Activated CD8-positive, alpha-beta T cell treated with anti-CD3 and anti-CD28 coated beads, Interleukin-2, amount 10 ng/mL, durations not matched to agents 7 days and 5 days (primary cell): ENCODE measurements at regions of chr6 and their contacts with region 1.

Region 1: GRCh38 chr6:37566111-37566949 is 66.6 kb upstream of the CCDC167 start:
- DNase-seq: peak; percentile 75
- ATAC-seq: peak; percentile 96
- H3K4me3 Mint-ChIP-seq: peak overlapping the region; percentile 29
- H3K27ac Mint-ChIP-seq: no peak overlapping the region
- H3K4me1 Mint-ChIP-seq: peaks cover 3% of the 10 kb centered on the region
- H3K27me3 Mint-ChIP-seq: peaks cover 17% of the 10 kb centered on the region

Region 2: GRCh38 chr6:37155394-37156312 is 410.7 kb before region 1 on chr6:
- CTCF ChIA-PET with region 1: no interaction called
- POLR2A ChIA-PET with region 1: no interaction called
- DNase-seq: no peak
- ATAC-seq: peak; percentile 64
- H3K4me3 Mint-ChIP-seq: no peak overlapping the region
- H3K27ac Mint-ChIP-seq: no peak overlapping the region
- H3K4me1 Mint-ChIP-seq: peaks cover 16% of the 10 kb centered on the region
- H3K27me3 Mint-ChIP-seq: peaks cover 2% of the 10 kb centered on the region

Region 3: GRCh38 chr6:37222125-37222967 is 344.0 kb before region 1 on chr6:
- CTCF ChIA-PET with region 1: no interaction called
- POLR2A ChIA-PET with region 1: no interaction called
- DNase-seq: peak; percentile 86
- ATAC-seq: peak; percentile 97
- H3K4me3 Mint-ChIP-seq: peak overlapping the region; percentile 81
- H3K27ac Mint-ChIP-seq: peak overlapping the region; percentile 65
- H3K4me1 Mint-ChIP-seq: peaks cover 38% of the 10 kb centered on the region
- H3K27me3 Mint-ChIP-seq: no peaks in the 10 kb centered on the region

Region 4: GRCh38 chr6:37491171-37491829 is 75.0 kb before region 1 on chr6:
- CTCF ChIA-PET with region 1: interaction called, 13 read pairs
- POLR2A ChIA-PET with region 1: no interaction called
- DNase-seq: no peak
- ATAC-seq: no peak
- H3K4me3 Mint-ChIP-seq: no peak overlapping the region
- H3K27ac Mint-ChIP-seq: no peak overlapping the region
- H3K4me1 Mint-ChIP-seq: peaks cover 45% of the 10 kb centered on the region
- H3K27me3 Mint-ChIP-seq: no peaks in the 10 kb centered on the region

Region 5: GRCh38 chr6:37516076-37516919 is 50.0 kb before region 1 on chr6:
- CTCF ChIA-PET with region 1: interaction called, 29 read pairs
- POLR2A ChIA-PET with region 1: interaction called, 3 read pairs
- DNase-seq: peak; percentile 94
- ATAC-seq: peak; percentile 89
- H3K4me3 Mint-ChIP-seq: peak overlapping the region; percentile 83
- H3K27ac Mint-ChIP-seq: peak overlapping the region; percentile 98
- H3K4me1 Mint-ChIP-seq: peaks cover 74% of the 10 kb centered on the region
- H3K27me3 Mint-ChIP-seq: no peaks in the 10 kb centered on the region

Region 6: GRCh38 chr6:37547564-37548061 is 18.7 kb before region 1 on chr6:
- CTCF ChIA-PET with region 1: interaction called, 26 read pairs
- POLR2A ChIA-PET with region 1: no interaction called
- DNase-seq: peak; percentile 46
- ATAC-seq: peak; percentile 64
- H3K4me3 Mint-ChIP-seq: peak overlapping the region; percentile 23
- H3K27ac Mint-ChIP-seq: peak overlapping the region; percentile 77
- H3K4me1 Mint-ChIP-seq: peaks cover 20% of the 10 kb centered on the region
- H3K27me3 Mint-ChIP-seq: peaks cover 2% of the 10 kb centered on the region

Region 7: DNA sequence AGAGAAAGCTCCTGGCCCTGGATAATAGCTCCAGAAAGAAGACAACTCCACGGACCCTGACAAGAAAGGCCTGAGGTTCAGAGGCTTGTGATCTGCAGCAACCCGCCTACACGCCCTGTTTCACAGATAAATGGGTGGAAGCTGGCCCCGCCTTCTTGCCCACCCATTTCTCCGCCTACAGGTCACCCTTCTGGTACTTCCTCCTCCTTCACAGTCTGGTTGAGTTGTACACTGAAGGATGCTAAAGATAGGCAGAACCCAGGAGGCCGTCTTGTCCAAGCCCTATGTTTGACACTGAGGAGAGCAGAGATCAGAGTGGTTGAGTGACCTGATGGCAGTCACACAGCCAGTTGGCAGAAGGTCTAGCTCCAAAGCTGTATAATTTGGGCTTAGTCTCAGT is 165.6 kb after region 1 on chr6:
- CTCF ChIA-PET with region 1: no interaction called
- POLR2A ChIA-PET with region 1: no interaction called
- DNase-seq: peak; percentile 66
- ATAC-seq: peak; percentile 79
- H3K4me3 Mint-ChIP-seq: no peak overlapping the region
- H3K27ac Mint-ChIP-seq: no peak overlapping the region
- H3K4me1 Mint-ChIP-seq: peaks cover 2% of the 10 kb centered on the region
- H3K27me3 Mint-ChIP-seq: peaks cover 3% of the 10 kb centered on the region